GM12878 (cell line): ENCODE measurements at regions of chr6 and their contacts with region 1.

Region 1: GRCh38 chr6:111841822-111842221 is 31.4 kb downstream of the FYN start:
- DNase-seq: peak; percentile 60
- ATAC-seq: no peak
- H3K4me3 ChIP-seq: no peak overlapping the region; the same call in 1 of the 2 replicates
- H3K27ac ChIP-seq: peak overlapping the region; percentile 72
- H3K4me1 ChIP-seq: peaks cover 82% of the 10 kb centered on the region
- H3K27me3 ChIP-seq: no peaks in the 10 kb centered on the region
- CTCF ChIP-seq: no peak
- EP300 ChIP-seq: peak; percentile 36 to 52; a peak in 2 of 4 replicates
- POLR2A ChIP-seq: no peak
- RAD21 ChIP-seq: no peak

Region 2: DNA sequence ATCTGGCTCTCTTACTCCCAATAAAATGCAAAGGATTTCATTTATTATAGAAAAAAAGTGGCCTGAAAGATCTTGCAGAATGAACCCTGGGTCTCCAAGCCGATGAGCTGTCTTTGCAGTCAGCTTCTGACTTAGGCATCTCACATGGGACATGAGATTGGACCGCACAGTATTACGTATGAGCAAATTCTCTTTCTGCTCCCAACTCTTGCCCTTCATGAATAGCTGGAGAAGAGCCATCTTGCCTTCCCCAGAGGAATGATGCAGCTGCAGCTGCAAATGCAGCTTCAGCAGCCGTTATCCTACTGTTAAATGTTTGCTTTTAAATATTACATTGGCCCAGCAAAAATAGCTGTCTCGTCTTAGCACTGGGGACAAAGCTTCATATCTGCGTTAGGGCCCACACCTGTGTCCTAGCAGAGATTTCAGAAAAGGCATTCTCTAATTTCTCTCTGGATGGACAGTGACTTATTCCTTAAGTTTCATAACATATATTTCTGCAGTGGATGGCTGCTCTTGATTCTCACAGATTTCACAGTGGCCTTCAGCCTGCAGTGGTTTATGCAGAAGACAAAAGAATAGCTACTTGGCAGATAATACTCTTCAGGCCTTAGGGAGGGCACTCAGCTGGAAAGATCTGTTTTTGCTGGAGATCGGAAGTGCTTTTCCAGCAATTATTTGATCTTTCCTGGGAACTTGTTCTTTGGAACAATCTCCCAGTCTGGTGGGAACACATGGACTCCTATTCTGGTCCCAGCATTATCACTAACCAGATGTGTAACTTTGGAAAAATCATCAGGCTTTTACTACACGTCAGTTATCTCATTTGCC is 97.7 kb before region 1 on chr6:
- CTCF ChIA-PET with region 1: interaction called, 3 read pairs
- POLR2A ChIA-PET with region 1: interaction called, 4 read pairs
- RAD21 ChIA-PET with region 1: interaction called, 19 read pairs
- SMC1A ChIA-PET with region 1: interaction called, 15 read pairs
- in situ Hi-C with region 1: no loop called
- intact Hi-C with region 1: no loop called
- DNase-seq: no peak
- ATAC-seq: no peak
- H3K4me3 ChIP-seq: no peak overlapping the region
- H3K27ac ChIP-seq: no peak overlapping the region
- H3K4me1 ChIP-seq: peaks cover 58% of the 10 kb centered on the region
- H3K27me3 ChIP-seq: no peaks in the 10 kb centered on the region
- CTCF ChIP-seq: no peak
- EP300 ChIP-seq: no peak
- POLR2A ChIP-seq: no peak
- RAD21 ChIP-seq: no peak

Region 3: GRCh38 chr6:111777357-111777756 is 64.5 kb before region 1 on chr6:
- CTCF ChIA-PET with region 1: interaction called, 9 read pairs
- POLR2A ChIA-PET with region 1: interaction called, 3 read pairs
- RAD21 ChIA-PET with region 1: interaction called, 10 read pairs
- SMC1A ChIA-PET with region 1: interaction called, 7 read pairs
- in situ Hi-C with region 1: no loop called
- intact Hi-C with region 1: no loop called
- DNase-seq: no peak
- ATAC-seq: peak; percentile 82
- H3K4me3 ChIP-seq: no peak overlapping the region
- H3K27ac ChIP-seq: peak overlapping the region; percentile 61
- H3K4me1 ChIP-seq: peaks cover 22% of the 10 kb centered on the region
- H3K27me3 ChIP-seq: no peaks in the 10 kb centered on the region
- CTCF ChIP-seq: peak; percentile 39 to 50 (median 43); a peak in 4 of 6 replicates
- EP300 ChIP-seq: no peak
- POLR2A ChIP-seq: no peak
- RAD21 ChIP-seq: peak; percentile 72

Region 4: DNA sequence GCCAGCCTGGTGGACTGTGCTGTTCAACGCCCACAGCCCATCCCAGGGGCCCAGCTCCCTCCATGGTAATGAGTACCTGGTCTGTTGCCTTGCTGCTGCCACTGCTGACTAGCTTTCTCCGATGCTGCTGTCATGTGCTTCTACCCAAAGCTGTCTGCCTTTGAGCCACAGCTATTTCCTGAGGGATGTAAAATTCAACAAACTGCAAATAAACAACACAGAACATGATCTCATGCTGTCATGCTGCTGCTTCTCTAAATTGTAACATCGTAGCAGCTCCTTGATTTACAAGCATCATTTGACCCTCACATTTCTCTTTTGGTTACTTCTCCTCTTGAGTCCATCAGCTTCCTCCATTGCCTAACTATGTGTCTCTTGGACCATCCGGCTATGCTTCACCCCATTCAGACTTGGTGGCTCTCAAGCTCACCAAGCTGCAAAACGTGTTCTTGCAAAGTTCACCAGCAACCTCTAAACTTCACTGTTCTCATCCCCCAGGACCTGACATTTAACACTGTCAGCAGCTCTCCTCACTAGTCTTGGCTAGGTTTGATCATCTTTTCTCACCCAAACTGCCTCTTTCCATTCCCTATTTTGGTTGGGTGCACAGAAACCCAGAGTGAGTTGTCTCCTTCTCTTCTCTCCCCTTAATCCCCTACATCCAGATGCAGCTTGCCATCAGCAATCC is 23.1 kb before region 1 on chr6:
- CTCF ChIA-PET with region 1: interaction called, 3 read pairs
- POLR2A ChIA-PET with region 1: interaction called, 3 read pairs
- RAD21 ChIA-PET with region 1: interaction called, 44 read pairs
- SMC1A ChIA-PET with region 1: interaction called, 92 read pairs
- in situ Hi-C with region 1: no loop called
- intact Hi-C with region 1: no loop called
- DNase-seq: no peak
- ATAC-seq: peak; percentile 31
- H3K4me3 ChIP-seq: no peak overlapping the region
- H3K27ac ChIP-seq: no peak overlapping the region; the same call in 1 of the 2 replicates
- H3K4me1 ChIP-seq: peaks cover 16% of the 10 kb centered on the region
- H3K27me3 ChIP-seq: no peaks in the 10 kb centered on the region
- CTCF ChIP-seq: no peak
- EP300 ChIP-seq: no peak
- POLR2A ChIP-seq: no peak
- RAD21 ChIP-seq: no peak

Region 5: DNA sequence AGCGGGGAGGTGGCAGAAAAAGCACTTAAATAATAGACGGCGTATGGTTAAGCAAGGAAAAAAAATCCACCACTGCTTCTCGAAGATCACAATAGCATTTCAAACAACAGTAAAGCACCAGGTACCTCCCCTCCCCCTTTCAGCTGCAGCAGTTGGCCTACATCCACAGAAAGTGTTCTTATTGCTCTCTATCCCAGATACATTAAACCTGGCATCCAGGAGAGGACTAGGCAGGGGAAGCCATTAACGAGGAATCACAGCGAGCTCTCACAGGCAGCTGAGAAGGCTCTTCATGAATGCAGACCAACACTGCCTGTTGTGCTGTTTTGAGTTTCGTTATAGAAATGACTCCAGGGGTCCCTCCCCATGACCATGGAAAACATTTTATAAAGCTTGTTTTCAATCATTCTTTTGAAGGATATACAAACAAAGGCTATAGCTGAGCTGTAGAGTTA is 19.6 kb after region 1 on chr6:
- CTCF ChIA-PET with region 1: interaction called, 9 read pairs
- POLR2A ChIA-PET with region 1: interaction called, 5 read pairs
- RAD21 ChIA-PET with region 1: interaction called, 8 read pairs
- SMC1A ChIA-PET with region 1: interaction called, 63 read pairs
- in situ Hi-C with region 1: no loop called
- intact Hi-C with region 1: no loop called
- DNase-seq: no peak
- ATAC-seq: no peak
- H3K4me3 ChIP-seq: no peak overlapping the region
- H3K27ac ChIP-seq: no peak overlapping the region
- H3K4me1 ChIP-seq: peaks cover 21% of the 10 kb centered on the region
- H3K27me3 ChIP-seq: no peaks in the 10 kb centered on the region
- CTCF ChIP-seq: no peak
- EP300 ChIP-seq: no peak
- POLR2A ChIP-seq: no peak
- RAD21 ChIP-seq: no peak

Region 6: DNA sequence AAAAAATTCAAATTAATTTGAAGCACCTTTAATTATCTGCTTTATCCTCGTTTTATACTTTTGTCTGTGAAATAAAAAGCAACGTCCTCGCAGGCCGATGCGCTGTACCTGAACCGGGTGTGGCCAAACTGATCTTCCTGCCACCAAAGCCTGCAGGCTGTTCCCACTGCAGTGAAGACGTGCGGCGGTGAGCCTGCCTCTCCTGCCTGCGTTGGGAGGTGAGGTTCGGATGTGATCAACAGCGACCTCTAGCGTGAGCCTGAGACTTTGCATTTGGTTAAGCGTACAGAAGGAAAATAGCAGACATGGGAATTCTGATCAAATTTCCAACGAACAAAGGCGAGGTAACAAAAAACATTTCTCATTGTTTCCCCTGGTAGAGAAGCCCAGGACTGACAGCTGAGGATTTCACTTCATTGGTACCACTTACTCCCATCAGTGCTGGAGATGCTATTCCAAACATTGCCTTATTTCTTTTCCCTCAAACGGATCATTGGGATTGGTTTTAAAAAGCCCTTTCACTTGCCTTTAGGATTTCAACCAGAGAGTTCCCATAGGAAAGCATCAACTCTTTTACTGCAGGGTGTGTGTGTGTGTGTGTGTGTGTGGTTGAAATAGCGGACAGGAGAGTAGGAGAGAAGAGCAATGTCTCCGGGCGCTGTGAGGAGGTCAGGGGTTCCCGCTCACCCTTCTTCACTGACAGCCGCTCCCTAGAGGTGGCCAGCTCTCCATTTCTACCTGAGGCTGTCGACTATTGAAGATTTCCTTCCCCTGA is 155.4 kb after region 1 on chr6:
- CTCF ChIA-PET with region 1: interaction called, 6 read pairs
- POLR2A ChIA-PET with region 1: interaction called, 3 read pairs
- RAD21 ChIA-PET with region 1: interaction called, 4 read pairs
- SMC1A ChIA-PET with region 1: interaction called, 13 read pairs
- in situ Hi-C with region 1: no loop called
- intact Hi-C with region 1: loop called (anchors 2 kb)
- DNase-seq: no peak
- ATAC-seq: peak; percentile 85
- H3K4me3 ChIP-seq: no peak overlapping the region
- H3K27ac ChIP-seq: no peak overlapping the region
- H3K4me1 ChIP-seq: peaks cover 28% of the 10 kb centered on the region
- H3K27me3 ChIP-seq: no peaks in the 10 kb centered on the region
- CTCF ChIP-seq: peak; percentile 85 to 95 (median 93); a peak in 5 of 6 replicates
- EP300 ChIP-seq: no peak
- POLR2A ChIP-seq: no peak
- RAD21 ChIP-seq: peak; percentile 99